ENCODE measurements at regions of chr3 and their contacts with region 1.

Region 1: DNA sequence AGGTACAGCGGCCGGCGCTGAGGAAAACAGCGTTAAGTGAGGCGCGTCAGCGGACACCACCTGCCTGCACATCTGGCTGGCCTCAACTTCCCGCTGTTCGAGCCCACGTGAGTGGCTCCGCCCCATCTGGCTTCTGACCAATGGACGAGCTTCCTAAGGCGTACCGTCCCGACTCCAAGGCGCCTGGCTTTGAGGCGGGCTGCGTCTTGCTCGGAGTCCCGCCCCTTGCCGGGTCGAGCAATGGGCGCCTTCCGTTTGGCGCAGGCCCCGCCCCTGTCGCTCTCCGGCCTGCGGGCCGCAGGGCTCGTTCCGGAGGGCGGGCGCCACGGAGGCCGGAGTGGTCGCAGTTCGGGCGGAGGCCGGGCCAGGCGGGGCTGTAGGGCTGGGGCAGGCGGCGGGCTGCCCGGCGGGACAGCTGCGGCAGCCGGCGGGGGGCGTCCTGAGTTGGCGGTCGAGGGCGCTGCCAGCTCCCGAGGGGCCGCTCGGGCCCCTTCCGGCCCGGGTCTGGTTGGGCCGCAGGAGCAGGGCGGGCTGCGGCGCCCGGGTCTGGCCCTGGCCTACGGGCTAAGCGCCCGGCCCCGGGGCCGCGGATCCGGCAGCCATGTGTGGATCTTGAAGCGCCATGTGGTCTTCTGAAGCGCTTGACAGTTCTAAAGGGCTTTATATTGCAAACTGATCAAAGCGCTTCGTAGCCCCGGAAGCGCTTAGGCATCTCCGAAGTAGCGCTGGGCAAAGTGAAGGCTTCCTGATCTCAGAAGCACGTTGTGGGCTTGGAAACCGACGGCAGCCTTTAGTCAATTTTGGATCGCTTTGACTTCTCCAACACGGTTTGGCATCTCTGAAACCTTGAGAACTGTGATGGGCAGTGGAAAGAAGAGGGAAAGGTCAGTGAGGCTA is at the start of gene TATDN2:
- DNase-seq: peak; percentile 96
- H3K4me3 ChIP-seq: peak within 1 kb of the TSS; percentile 64 to 94 (median 81)
- H3K27ac ChIP-seq: peak within 1 kb of the TSS; percentile 45
- H3K4me1 ChIP-seq: peaks cover 14% of the 10 kb centered on the region
- H3K27me3 ChIP-seq: no peaks in the 10 kb centered on the region
- CTCF ChIP-seq: no peak
- total RNA-seq, gene TATDN2: 16.7 to 28.7 TPM

Region 2: GRCh38 chr3:9669720-9670432 is 578.6 kb before region 1 on chr3:
- CTCF ChIA-PET with region 1: no interaction called
- dilution Hi-C with region 1: loop called (anchors 10 kb)
- in situ Hi-C with region 1: no loop called
- intact Hi-C with region 1: no loop called
- DNase-seq: no peak
- H3K4me3 ChIP-seq: no peak overlapping the region
- H3K27ac ChIP-seq: no peak overlapping the region
- H3K4me1 ChIP-seq: no peaks in the 10 kb centered on the region
- H3K27me3 ChIP-seq: no peaks in the 10 kb centered on the region
- CTCF ChIP-seq: no peak

Region 3: GRCh38 chr3:10115326-10116137 is 132.9 kb before region 1 on chr3 and contains the start of gene BRK1:
- CTCF ChIA-PET with region 1: no interaction called
- dilution Hi-C with region 1: loop called (anchors 10 kb)
- in situ Hi-C with region 1: no loop called
- intact Hi-C with region 1: no loop called
- DNase-seq: peak; percentile 93
- H3K4me3 ChIP-seq: peak within 1 kb of the TSS; percentile 82 to 99 (median 88)
- H3K27ac ChIP-seq: peak within 1 kb of the TSS; percentile 77
- H3K4me1 ChIP-seq: peaks cover 8% of the 10 kb centered on the region
- H3K27me3 ChIP-seq: no peaks in the 10 kb centered on the region
- CTCF ChIP-seq: no peak
- total RNA-seq, gene BRK1: 80.4 to 134 TPM

Region 4: DNA sequence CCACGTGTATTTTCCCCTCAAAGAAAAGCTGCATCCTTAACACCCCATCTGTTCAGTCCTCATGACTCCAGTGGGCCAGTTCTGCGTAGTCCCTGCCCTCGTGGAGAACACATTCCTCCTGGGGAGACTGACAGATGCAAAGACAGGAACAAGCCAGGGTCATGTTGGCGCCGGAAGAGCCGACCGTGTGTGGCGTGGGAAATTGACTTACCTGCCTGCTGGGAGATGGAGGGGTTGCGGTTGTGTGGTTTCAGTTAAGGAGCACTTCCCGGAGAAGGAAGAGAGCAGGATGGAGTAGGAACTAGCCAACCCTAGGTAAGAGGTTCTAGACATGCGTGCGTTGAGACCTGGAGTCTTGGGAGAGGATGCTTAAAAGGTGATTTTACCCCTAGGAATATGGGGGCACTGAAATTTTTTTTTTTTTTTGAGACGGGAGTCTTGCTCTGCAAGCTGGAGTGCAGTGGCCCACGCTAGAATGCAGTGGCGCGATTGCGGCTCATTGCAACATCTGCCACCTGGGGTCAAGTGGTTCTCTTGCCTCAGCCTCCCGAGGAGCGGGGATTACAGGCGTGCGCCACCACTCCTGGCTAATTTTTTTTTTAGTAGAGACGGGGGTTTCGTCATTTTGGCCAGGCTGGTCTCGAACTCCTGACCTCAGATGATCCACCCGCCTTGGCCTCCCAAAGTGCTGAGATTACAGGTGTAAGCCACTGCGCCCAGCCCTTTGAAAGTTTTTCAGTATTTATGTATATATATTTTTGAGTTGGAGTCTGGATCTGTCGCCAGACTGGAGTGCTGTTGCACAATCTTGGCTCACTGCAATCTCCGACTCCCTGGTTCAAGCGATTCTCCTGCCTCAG is 105.5 kb before region 1 on chr3:
- CTCF ChIA-PET with region 1: no interaction called
- dilution Hi-C with region 1: no loop called
- in situ Hi-C with region 1: no loop called
- intact Hi-C with region 1: loop called (anchors 5 kb)
- DNase-seq: peak; percentile 29
- H3K4me3 ChIP-seq: peak overlapping the region; percentile 48 to 95 (median 67)
- H3K27ac ChIP-seq: no peak overlapping the region
- H3K4me1 ChIP-seq: peaks cover 7% of the 10 kb centered on the region
- H3K27me3 ChIP-seq: no peaks in the 10 kb centered on the region
- CTCF ChIP-seq: no peak

Region 5: DNA sequence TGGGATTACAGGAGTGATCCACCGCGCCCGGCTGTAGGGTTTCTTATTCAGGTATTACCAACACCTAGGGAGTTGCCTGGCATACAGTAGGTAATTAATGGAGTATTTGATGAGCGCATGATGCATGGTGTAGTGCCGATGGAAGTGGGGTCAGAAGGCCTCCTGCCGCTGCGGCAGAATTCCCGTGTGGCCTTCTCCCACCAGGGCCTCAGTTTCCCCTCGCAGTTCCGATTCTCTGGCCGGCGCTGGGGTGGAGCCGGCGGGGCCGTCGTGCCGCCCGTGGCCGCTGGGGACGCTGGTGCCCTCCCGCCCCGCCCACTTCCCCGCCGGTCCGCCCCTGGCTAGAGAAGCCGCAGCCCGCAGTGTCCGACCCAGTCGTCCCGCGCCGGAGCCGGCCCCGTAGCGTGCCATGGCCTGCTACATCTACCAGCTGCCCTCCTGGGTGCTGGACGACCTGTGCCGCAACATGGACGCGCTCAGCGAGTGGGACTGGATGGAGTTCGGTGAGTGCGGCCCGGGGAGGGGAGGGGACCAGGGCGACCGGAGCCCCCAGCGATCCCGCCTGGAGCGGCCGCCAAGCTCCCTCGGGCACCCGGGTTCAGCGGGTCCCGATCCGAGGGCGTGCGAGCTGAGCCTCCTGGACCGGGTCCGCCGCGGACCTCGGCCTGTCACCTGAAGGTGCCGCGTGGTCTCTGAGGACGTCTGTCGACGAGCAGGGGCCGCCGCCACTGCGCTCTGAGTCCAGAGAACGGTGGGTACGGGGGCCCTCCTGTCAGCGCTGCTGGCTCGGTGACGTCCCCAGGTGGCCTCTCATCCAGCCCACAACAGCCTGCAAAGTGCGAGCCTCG is 83.7 kb before region 1 on chr3 and contains the start of gene IRAK2:
- CTCF ChIA-PET with region 1: no interaction called
- dilution Hi-C with region 1: loop called (anchors 5 kb)
- in situ Hi-C with region 1: no loop called
- intact Hi-C with region 1: no loop called
- DNase-seq: peak; percentile 49
- H3K4me3 ChIP-seq: peak within 1 kb of the TSS; percentile 79 to 100 (median 95)
- H3K27ac ChIP-seq: peak within 1 kb of the TSS; percentile 21
- H3K4me1 ChIP-seq: peaks cover 5% of the 10 kb centered on the region
- H3K27me3 ChIP-seq: no peaks in the 10 kb centered on the region
- CTCF ChIP-seq: peak; percentile 38 to 67
- total RNA-seq, gene IRAK2: 2.5 to 16.9 TPM

Region 6: GRCh38 chr3:10192953-10193691 is 55.3 kb before region 1 on chr3:
- CTCF ChIA-PET with region 1: no interaction called
- dilution Hi-C with region 1: loop called (anchors 5 kb)
- in situ Hi-C with region 1: no loop called
- intact Hi-C with region 1: loop called (anchors 2 kb)
- DNase-seq: peak; percentile 64
- H3K4me3 ChIP-seq: no peak overlapping the region
- H3K27ac ChIP-seq: peak overlapping the region; percentile 99
- H3K4me1 ChIP-seq: peaks cover 68% of the 10 kb centered on the region
- H3K27me3 ChIP-seq: no peaks in the 10 kb centered on the region
- CTCF ChIP-seq: peak; percentile 49 to 51

Measured in mammary epithelial cell (primary cell).